ENCODE measurements at regions of chr14 and their contacts with region 1.

Region 1: GRCh38 chr14:39025810-39026627 is 77.0 kb downstream of the SEC23A start:
- DNase-seq: peak; percentile 53 to 59
- H3K4me3 ChIP-seq: no peak overlapping the region
- H3K4me3 Mint-ChIP-seq: peak overlapping the region; percentile 48
- H3K27ac Mint-ChIP-seq: peak overlapping the region; percentile 79
- H3K4me1 ChIP-seq: peaks cover 38% of the 10 kb centered on the region
- H3K4me1 Mint-ChIP-seq: peaks cover 51% of the 10 kb centered on the region
- H3K27me3 ChIP-seq: no peaks in the 10 kb centered on the region
- H3K27me3 Mint-ChIP-seq: no peaks in the 10 kb centered on the region
- CTCF ChIP-seq: no peak

Region 2: GRCh38 chr14:38553586-38553985 is 472.4 kb before region 1 on chr14:
- CTCF ChIA-PET with region 1: no interaction called
- POLR2A ChIA-PET with region 1: no interaction called
- intact Hi-C with region 1: no loop called
- DNase-seq: no peak
- H3K4me3 ChIP-seq: no peak overlapping the region
- H3K4me3 Mint-ChIP-seq: no peak overlapping the region
- H3K27ac Mint-ChIP-seq: no peak overlapping the region
- H3K4me1 ChIP-seq: no peaks in the 10 kb centered on the region
- H3K4me1 Mint-ChIP-seq: no peaks in the 10 kb centered on the region
- H3K27me3 ChIP-seq: no peaks in the 10 kb centered on the region
- H3K27me3 Mint-ChIP-seq: peaks cover 2% of the 10 kb centered on the region
- CTCF ChIP-seq: no peak

Region 3: GRCh38 chr14:38646391-38646790 is 379.6 kb before region 1 on chr14:
- CTCF ChIA-PET with region 1: no interaction called
- POLR2A ChIA-PET with region 1: no interaction called
- intact Hi-C with region 1: no loop called
- DNase-seq: no peak
- H3K4me3 ChIP-seq: no peak overlapping the region
- H3K4me3 Mint-ChIP-seq: no peak overlapping the region
- H3K27ac Mint-ChIP-seq: no peak overlapping the region
- H3K4me1 ChIP-seq: no peaks in the 10 kb centered on the region
- H3K4me1 Mint-ChIP-seq: no peaks in the 10 kb centered on the region
- H3K27me3 ChIP-seq: no peaks in the 10 kb centered on the region
- H3K27me3 Mint-ChIP-seq: no peaks in the 10 kb centered on the region
- CTCF ChIP-seq: no peak

Region 4: DNA sequence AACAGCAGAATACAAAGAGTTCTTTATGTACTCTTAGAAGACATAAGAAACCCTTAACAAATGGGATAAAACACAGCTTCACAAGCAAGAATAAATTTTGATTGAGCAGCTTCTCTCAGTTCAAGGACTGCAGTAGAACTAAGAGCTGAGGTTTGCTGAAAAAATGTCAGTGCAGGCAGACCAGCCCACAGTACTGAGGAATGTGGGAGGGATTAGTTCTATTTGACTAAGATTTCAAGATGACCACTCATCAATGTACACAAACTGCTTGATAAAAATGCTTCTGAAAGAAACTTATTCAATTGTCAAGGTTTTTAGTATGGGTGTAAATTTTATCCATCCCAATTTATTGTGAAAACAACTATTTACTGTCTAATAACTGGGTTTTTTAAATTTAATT is 61.4 kb before region 1 on chr14:
- CTCF ChIA-PET with region 1: no interaction called
- POLR2A ChIA-PET with region 1: no interaction called
- intact Hi-C with region 1: loop called (anchors 2 kb)
- DNase-seq: peak; percentile 48 to 49
- H3K4me3 ChIP-seq: no peak overlapping the region
- H3K4me3 Mint-ChIP-seq: no peak overlapping the region
- H3K27ac Mint-ChIP-seq: no peak overlapping the region
- H3K4me1 ChIP-seq: peaks cover 20% of the 10 kb centered on the region
- H3K4me1 Mint-ChIP-seq: peaks cover 5% of the 10 kb centered on the region
- H3K27me3 ChIP-seq: no peaks in the 10 kb centered on the region
- H3K27me3 Mint-ChIP-seq: no peaks in the 10 kb centered on the region
- CTCF ChIP-seq: no peak